Motor neuron (in vitro differentiated cells): ENCODE measurements at regions of chr4 and their contacts with region 1.

Region 1: DNA sequence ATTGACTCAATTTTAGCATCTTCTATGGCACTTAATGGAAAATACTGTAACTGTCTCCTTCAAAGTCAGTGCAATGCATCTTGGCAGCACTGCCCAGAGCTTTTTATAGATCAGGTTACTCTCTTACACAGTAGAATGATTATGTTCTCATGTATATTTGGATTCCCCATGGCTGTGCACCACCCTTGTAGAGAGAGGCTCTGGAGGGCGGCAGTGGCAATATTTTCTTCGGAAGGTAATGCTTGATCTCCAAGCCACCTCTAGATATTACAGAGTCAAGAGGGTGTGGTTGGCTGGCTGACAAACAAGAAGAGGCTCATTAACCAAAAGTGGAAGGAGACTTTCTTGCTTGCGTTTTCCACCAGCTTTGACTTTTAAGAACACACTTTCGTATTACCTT is 72.8 kb upstream of the ARSJ start:
- ATAC-seq: peak in 3 of 8 experiments; percentile 17 to 74 (median 70)
- H3K4me3 ChIP-seq: no peak overlapping the region
- H3K27ac ChIP-seq: no peak overlapping the region
- H3K4me1 ChIP-seq: no peaks in the 10 kb centered on the region

Region 2: DNA sequence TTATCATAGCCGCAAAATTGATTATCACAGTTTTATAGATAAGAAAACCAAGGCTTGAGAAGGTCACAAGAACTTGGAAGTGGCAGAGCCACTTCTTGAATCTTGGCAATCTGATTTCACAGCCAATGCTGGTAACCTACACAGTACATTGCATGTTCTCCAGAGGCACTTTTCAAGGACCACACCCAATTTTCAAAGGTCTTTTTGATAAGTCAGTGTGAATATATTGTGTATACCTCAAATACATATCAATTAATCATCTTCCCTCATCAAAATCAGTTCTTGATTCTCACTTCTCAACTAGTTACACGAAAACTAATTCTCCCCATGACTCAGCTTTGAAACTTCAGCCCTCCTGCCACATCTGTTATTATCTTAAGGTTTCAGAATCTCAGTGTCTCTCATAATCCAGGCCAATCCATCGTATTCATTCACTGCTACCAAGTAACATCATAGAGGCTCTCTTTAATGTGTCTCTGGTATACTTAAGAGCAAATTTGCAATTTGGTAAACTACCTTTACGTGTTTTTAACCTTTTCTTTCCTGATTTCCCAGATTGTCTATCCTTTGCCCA is 307.5 kb before region 1 on chr4:
- in situ Hi-C with region 1: no loop called
- ATAC-seq: no peak
- H3K4me3 ChIP-seq: no peak overlapping the region
- H3K27ac ChIP-seq: no peak overlapping the region
- H3K4me1 ChIP-seq: no peaks in the 10 kb centered on the region

Region 3: GRCh38 chr4:113781439-113782040 is 270.7 kb before region 1 on chr4:
- in situ Hi-C with region 1: loop called in 1 of 9 experiments (anchors 25 kb)
- ATAC-seq: peak in 3 of 8 experiments; percentile 33 to 42 (median 38)
- H3K4me3 ChIP-seq: no peak overlapping the region
- H3K27ac ChIP-seq: no peak overlapping the region
- H3K4me1 ChIP-seq: no peaks in the 10 kb centered on the region

Region 4: GRCh38 chr4:113893546-113893945 is 158.7 kb before region 1 on chr4:
- in situ Hi-C with region 1: no loop called
- ATAC-seq: no peak
- H3K4me3 ChIP-seq: no peak overlapping the region
- H3K27ac ChIP-seq: no peak overlapping the region
- H3K4me1 ChIP-seq: no peaks in the 10 kb centered on the region